Activated CD4-positive, alpha-beta memory T cell treated with anti-CD3 and anti-CD28 coated beads for 36 hours (primary cell): ENCODE measurements at regions of chr15 and their contacts with region 1.

Region 1: GRCh38 chr15:85702321-85703101 is 92.2 kb downstream of the KLHL25 start:
- DNase-seq: peak; percentile 58
- H3K4me3 Mint-ChIP-seq: peak overlapping the region; percentile 64
- H3K27ac Mint-ChIP-seq: peak overlapping the region; percentile 92
- H3K4me1 Mint-ChIP-seq: peaks cover 71% of the 10 kb centered on the region
- H3K27me3 Mint-ChIP-seq: no peaks in the 10 kb centered on the region

Region 2: GRCh38 chr15:85407804-85408746 is 294.4 kb before region 1 on chr15:
- CTCF ChIA-PET with region 1: no interaction called
- POLR2A ChIA-PET with region 1: no interaction called
- intact Hi-C with region 1: loop called (anchors 1 kb)
- DNase-seq: peak; percentile 64
- H3K4me3 Mint-ChIP-seq: peak overlapping the region; percentile 53
- H3K27ac Mint-ChIP-seq: peak overlapping the region; percentile 91
- H3K4me1 Mint-ChIP-seq: peaks cover 81% of the 10 kb centered on the region
- H3K27me3 Mint-ChIP-seq: no peaks in the 10 kb centered on the region

Region 3: GRCh38 chr15:85485956-85486567 is 216.4 kb before region 1 on chr15:
- CTCF ChIA-PET with region 1: no interaction called
- POLR2A ChIA-PET with region 1: interaction called, 4 read pairs
- intact Hi-C with region 1: loop called (anchors 5 kb)
- DNase-seq: peak; percentile 41
- H3K4me3 Mint-ChIP-seq: no peak overlapping the region
- H3K27ac Mint-ChIP-seq: peak overlapping the region; percentile 32
- H3K4me1 Mint-ChIP-seq: peaks cover 69% of the 10 kb centered on the region
- H3K27me3 Mint-ChIP-seq: no peaks in the 10 kb centered on the region

Region 4: GRCh38 chr15:85607842-85608241 is 94.7 kb before region 1 on chr15:
- CTCF ChIA-PET with region 1: no interaction called
- POLR2A ChIA-PET with region 1: no interaction called
- intact Hi-C with region 1: no loop called
- DNase-seq: no peak
- H3K4me3 Mint-ChIP-seq: no peak overlapping the region
- H3K27ac Mint-ChIP-seq: no peak overlapping the region
- H3K4me1 Mint-ChIP-seq: peaks cover 27% of the 10 kb centered on the region
- H3K27me3 Mint-ChIP-seq: no peaks in the 10 kb centered on the region

Region 5: GRCh38 chr15:85646538-85647091 is 55.9 kb before region 1 on chr15:
- CTCF ChIA-PET with region 1: interaction called, 3 read pairs
- POLR2A ChIA-PET with region 1: interaction called, 16 read pairs
- intact Hi-C with region 1: loop called (anchors 1 kb)
- DNase-seq: peak; percentile 58
- H3K4me3 Mint-ChIP-seq: no peak overlapping the region
- H3K27ac Mint-ChIP-seq: peak overlapping the region; percentile 90
- H3K4me1 Mint-ChIP-seq: peaks cover 65% of the 10 kb centered on the region
- H3K27me3 Mint-ChIP-seq: no peaks in the 10 kb centered on the region

Region 6: GRCh38 chr15:85667491-85668424 is 34.8 kb before region 1 on chr15:
- CTCF ChIA-PET with region 1: no interaction called
- POLR2A ChIA-PET with region 1: interaction called, 5 read pairs
- intact Hi-C with region 1: loop called (anchors 1 kb)
- DNase-seq: peak; percentile 62
- H3K4me3 Mint-ChIP-seq: peak overlapping the region; percentile 20
- H3K27ac Mint-ChIP-seq: peak overlapping the region; percentile 95
- H3K4me1 Mint-ChIP-seq: peaks cover 33% of the 10 kb centered on the region
- H3K27me3 Mint-ChIP-seq: no peaks in the 10 kb centered on the region

Region 7: GRCh38 chr15:85689729-85690128 is 12.8 kb before region 1 on chr15:
- CTCF ChIA-PET with region 1: interaction called, 42 read pairs
- POLR2A ChIA-PET with region 1: interaction called, 133 read pairs
- intact Hi-C with region 1: loop called (anchors 1 kb)
- DNase-seq: peak; percentile 78
- H3K4me3 Mint-ChIP-seq: peak overlapping the region; percentile 81
- H3K27ac Mint-ChIP-seq: peak overlapping the region; percentile 98
- H3K4me1 Mint-ChIP-seq: peaks cover 78% of the 10 kb centered on the region
- H3K27me3 Mint-ChIP-seq: no peaks in the 10 kb centered on the region

Region 8: GRCh38 chr15:85737061-85737460 is 34.5 kb after region 1 on chr15:
- CTCF ChIA-PET with region 1: no interaction called
- POLR2A ChIA-PET with region 1: no interaction called
- intact Hi-C with region 1: no loop called
- DNase-seq: no peak
- H3K4me3 Mint-ChIP-seq: no peak overlapping the region
- H3K27ac Mint-ChIP-seq: no peak overlapping the region
- H3K4me1 Mint-ChIP-seq: no peaks in the 10 kb centered on the region
- H3K27me3 Mint-ChIP-seq: no peaks in the 10 kb centered on the region

Region 9: DNA sequence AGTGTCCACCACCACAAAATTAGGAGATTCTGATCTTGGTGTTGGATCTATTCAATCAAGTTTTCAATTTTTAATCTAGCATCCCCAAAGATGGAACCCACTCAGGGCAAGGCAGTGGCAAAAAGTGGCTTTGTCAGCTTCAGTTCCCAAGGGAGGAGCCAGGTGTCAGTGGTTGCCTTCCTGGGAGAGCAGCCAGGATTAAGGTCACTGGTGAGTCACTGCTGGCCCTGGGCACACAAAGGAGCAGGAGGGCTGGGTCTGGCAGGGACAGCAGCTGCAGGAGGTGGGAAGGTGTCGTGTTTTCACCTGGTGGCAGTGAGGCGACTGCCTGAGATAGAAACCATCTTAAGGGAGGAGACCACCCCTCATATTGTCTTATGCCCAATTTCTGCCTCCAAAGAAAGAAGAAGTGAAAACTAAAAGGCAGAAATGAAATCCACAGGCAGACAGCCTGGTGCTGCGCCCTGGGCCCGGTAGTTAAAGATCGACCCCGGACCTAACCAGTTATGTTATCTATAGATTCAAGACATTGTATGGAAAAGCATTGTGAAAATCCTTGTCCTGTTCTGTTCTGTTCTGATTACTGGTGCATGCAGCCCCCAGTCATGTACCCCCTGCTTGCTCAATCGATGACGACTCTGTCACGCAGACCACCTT is 98.1 kb after region 1 on chr15:
- CTCF ChIA-PET with region 1: no interaction called
- POLR2A ChIA-PET with region 1: no interaction called
- intact Hi-C with region 1: no loop called
- DNase-seq: no peak
- H3K4me3 Mint-ChIP-seq: no peak overlapping the region
- H3K27ac Mint-ChIP-seq: no peak overlapping the region
- H3K4me1 Mint-ChIP-seq: peaks cover 6% of the 10 kb centered on the region
- H3K27me3 Mint-ChIP-seq: no peaks in the 10 kb centered on the region

Region 10: GRCh38 chr15:86040356-86041033 is 338.0 kb after region 1 on chr15:
- CTCF ChIA-PET with region 1: no interaction called
- POLR2A ChIA-PET with region 1: no interaction called
- intact Hi-C with region 1: no loop called
- DNase-seq: no peak
- H3K4me3 Mint-ChIP-seq: no peak overlapping the region
- H3K27ac Mint-ChIP-seq: no peak overlapping the region
- H3K4me1 Mint-ChIP-seq: no peaks in the 10 kb centered on the region
- H3K27me3 Mint-ChIP-seq: peaks cover 11% of the 10 kb centered on the region